Endothelial cell of umbilical vein (primary cell): ENCODE measurements at regions of chr22 and their contacts with region 1.

Region 1: DNA sequence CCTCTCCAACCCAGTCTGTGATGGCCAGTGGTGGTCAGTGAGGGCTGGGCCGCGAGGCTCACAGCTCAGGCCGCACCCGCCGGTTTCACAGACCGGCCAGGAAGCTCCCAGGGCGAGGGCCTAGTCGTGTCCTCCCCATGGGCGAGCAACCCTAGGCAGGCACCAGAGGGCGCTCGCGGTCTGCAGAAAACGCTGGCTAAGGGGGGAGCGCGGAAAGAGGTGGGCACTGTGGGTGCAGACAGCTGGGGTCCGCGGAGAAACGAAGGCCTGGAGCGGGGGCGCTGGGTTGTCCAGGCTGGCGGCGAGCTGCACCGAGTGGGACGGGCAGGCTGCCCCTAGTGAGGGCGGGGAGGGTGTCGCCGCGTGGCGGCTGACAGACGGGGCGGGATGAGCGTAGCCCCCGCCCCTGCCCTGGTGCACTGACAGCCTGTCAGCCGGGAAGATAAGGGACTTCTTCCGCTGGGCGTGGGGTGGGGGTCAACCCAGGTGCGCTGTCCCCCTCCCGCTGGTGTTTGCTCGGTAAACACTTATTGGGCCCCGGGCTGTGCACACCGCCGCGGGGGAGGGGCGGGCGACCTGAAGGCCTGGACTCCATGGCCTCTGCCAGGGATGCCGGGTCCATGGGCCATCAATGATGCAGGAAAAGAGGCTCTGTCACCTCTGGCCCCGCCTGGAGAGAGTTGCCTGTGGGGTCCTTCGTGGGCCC is 7.5 kb downstream of the GP1BB start:
- DNase-seq: peak; percentile 67
- H3K4me3 ChIP-seq: peak overlapping the region in 2 of 3 experiments; percentile 6 to 25
- H3K27ac ChIP-seq: no peak overlapping the region
- H3K4me1 ChIP-seq: peaks cover 3% of the 10 kb centered on the region
- H3K27me3 ChIP-seq: no peaks in the 10 kb centered on the region
- CTCF ChIP-seq: peak; percentile 94 to 98
- POLR2A ChIP-seq: no peak

Region 2: DNA sequence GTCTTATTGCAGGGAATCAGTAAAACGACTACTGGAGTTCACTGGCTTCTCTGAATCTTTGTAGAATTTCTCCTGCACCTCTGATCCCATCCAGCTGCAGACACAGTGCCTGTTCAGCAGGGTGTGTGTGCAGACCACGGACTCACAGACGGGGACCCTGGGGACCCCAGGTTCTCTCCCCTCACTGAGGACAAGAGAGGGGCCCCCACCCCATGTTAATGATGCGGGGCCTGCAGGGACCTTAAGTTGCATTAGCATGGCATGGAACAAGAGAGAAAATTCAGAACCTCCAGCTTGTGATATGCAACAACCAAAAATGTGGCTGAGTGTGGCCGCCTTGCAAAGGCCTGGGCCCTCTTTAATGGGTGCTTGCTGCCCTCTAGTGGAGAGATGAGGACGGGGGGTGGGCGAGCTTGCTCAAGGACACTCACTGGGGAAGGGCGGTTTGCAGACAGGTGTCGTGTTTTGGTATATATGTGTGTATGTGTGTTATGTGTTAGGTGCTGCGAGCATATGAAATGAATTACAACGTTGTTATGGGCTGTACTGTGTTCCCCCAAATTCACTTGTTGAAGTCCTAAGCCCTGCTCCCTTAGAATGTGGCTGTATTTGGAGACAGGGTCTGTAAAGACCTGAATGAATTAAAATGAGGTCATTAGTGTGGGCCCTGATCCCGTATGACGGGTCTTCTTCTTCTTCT is 100.9 kb before region 1 on chr22:
- CTCF ChIA-PET with region 1: no interaction called
- POLR2A ChIA-PET with region 1: no interaction called
- dilution Hi-C with region 1: no loop called
- intact Hi-C with region 1: no loop called
- DNase-seq: peak; percentile 80
- H3K4me3 ChIP-seq: no peak overlapping the region
- H3K27ac ChIP-seq: no peak overlapping the region
- H3K4me1 ChIP-seq: no peaks in the 10 kb centered on the region
- H3K27me3 ChIP-seq: peaks cover 0 to 5% of the 10 kb centered on the region in 2 experiments
- CTCF ChIP-seq: peak; percentile 91 to 92
- POLR2A ChIP-seq: no peak

Region 3: GRCh38 chr22:19717691-19718455 is 12.9 kb before region 1 on chr22:
- CTCF ChIA-PET with region 1: interaction called, 16 read pairs
- POLR2A ChIA-PET with region 1: no interaction called
- dilution Hi-C with region 1: no loop called
- intact Hi-C with region 1: no loop called
- DNase-seq: peak; percentile 62
- H3K4me3 ChIP-seq: peak overlapping the region; percentile 13 to 51 (median 39)
- H3K27ac ChIP-seq: no peak overlapping the region
- H3K4me1 ChIP-seq: peaks cover 18% of the 10 kb centered on the region
- H3K27me3 ChIP-seq: no peaks in the 10 kb centered on the region
- CTCF ChIP-seq: peak; percentile 73 to 92
- POLR2A ChIP-seq: no peak

Region 4: GRCh38 chr22:19766511-19767426 is 36.0 kb after region 1 on chr22:
- CTCF ChIA-PET with region 1: interaction called, 18 read pairs
- POLR2A ChIA-PET with region 1: no interaction called
- dilution Hi-C with region 1: no loop called
- intact Hi-C with region 1: loop called (anchors 1 kb)
- DNase-seq: no peak
- H3K4me3 ChIP-seq: no peak overlapping the region
- H3K27ac ChIP-seq: no peak overlapping the region
- H3K4me1 ChIP-seq: peaks cover 5% of the 10 kb centered on the region
- H3K27me3 ChIP-seq: peaks cover 11 to 19% of the 10 kb centered on the region in 2 experiments
- CTCF ChIP-seq: peak; percentile 33 to 39
- POLR2A ChIP-seq: no peak

Region 5: GRCh38 chr22:19854778-19855503 is 124.1 kb after region 1 on chr22 and contains the starts of genes GNB1L and RTL10:
- CTCF ChIA-PET with region 1: interaction called, 9 read pairs
- POLR2A ChIA-PET with region 1: no interaction called
- dilution Hi-C with region 1: no loop called
- intact Hi-C with region 1: loop called (anchors 2 kb)
- DNase-seq: peak; percentile 98
- H3K4me3 ChIP-seq: peak within 1 kb of the TSS; percentile 78 to 97 (median 88)
- H3K27ac ChIP-seq: peak within 1 kb of the TSS; percentile 65
- H3K4me1 ChIP-seq: peaks cover 32% of the 10 kb centered on the region
- H3K27me3 ChIP-seq: no peaks in the 10 kb centered on the region
- CTCF ChIP-seq: no peak
- POLR2A ChIP-seq: peak; percentile 98
- total RNA-seq, gene GNB1L: 5.9 and 11.2 TPM in 2 replicates
- total RNA-seq, gene RTL10: 31.9 and 32.1 TPM in 2 replicates

Region 6: DNA sequence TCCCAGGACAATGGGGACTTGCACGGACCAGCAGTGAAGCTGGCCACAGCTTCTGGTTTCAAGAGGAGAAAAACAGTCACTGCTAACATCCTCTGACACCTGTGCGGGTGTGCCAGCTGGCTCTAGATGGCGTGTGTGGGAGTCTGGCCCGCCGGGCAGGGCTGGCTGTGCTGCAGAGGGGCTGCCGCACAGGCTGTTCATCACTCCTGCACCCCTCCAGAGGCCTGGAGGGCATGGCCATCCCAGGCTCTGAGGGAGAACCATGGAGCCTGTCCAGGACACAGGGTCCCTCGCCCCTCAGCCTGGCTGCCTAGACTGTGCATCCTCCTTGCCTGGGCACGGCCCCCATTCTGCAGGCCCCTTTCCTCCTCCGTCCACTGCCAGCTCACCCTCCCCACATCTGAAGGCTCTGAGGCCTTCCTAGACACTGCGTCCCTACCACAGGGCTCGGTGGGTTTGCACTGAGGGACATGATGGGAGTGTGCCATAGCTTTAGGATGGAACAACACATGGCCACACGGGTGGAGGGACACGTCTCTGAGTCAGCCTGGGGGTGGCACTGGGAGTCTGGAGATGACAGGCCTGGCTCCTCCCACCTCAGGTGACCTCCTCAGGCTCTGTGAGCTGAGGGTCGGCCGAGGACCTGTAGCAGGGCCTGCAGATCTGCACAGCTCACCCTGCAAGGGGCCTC is 166.0 kb after region 1 on chr22:
- CTCF ChIA-PET with region 1: interaction called, 51 read pairs
- POLR2A ChIA-PET with region 1: no interaction called
- dilution Hi-C with region 1: no loop called
- intact Hi-C with region 1: no loop called
- DNase-seq: no peak
- H3K4me3 ChIP-seq: no peak overlapping the region
- H3K27ac ChIP-seq: no peak overlapping the region
- H3K4me1 ChIP-seq: peaks cover 25% of the 10 kb centered on the region
- H3K27me3 ChIP-seq: no peaks in the 10 kb centered on the region
- CTCF ChIP-seq: no peak
- POLR2A ChIP-seq: no peak

Region 7: GRCh38 chr22:19941365-19942082 is 210.7 kb after region 1 on chr22 and contains the starts of genes COMT and TXNRD2:
- CTCF ChIA-PET with region 1: interaction called, 15 read pairs
- POLR2A ChIA-PET with region 1: no interaction called
- dilution Hi-C with region 1: no loop called
- intact Hi-C with region 1: no loop called
- DNase-seq: peak; percentile 57
- H3K4me3 ChIP-seq: peak within 1 kb of the TSS; percentile 45 to 86 (median 83)
- H3K27ac ChIP-seq: peak within 1 kb of the TSS; percentile 84
- H3K4me1 ChIP-seq: peaks cover 41% of the 10 kb centered on the region
- H3K27me3 ChIP-seq: no peaks in the 10 kb centered on the region
- CTCF ChIP-seq: no peak
- POLR2A ChIP-seq: peak; percentile 82
- total RNA-seq, gene COMT: 221 and 246 TPM in 2 replicates
- total RNA-seq, gene TXNRD2: 211 and 245 TPM in 2 replicates

Region 8: DNA sequence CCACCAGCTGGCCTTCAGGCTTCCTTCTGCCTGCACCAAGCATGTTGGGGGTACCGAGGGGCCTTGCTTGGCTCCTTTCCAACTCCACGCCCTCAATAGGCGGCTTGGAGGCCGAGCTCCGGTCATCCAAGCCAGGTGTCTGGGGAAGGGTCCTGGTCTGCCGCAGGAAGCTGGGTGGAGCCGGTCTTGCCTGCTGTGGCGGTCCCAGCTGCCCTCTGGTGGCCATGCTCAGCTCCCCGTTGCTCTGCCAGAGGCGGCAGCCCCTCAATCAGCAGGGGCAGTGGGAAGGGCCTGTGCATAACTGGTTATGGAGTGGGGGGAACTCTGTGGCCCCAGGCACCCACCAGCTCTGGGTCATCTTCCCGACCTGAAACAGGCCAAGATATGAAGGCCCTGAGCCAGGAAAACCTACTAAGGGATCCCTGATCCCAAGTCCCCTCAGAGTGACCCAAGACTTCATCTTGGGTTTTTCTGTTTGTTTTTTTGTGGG is 282.6 kb after region 1 on chr22:
- CTCF ChIA-PET with region 1: interaction called, 13 read pairs
- POLR2A ChIA-PET with region 1: no interaction called
- dilution Hi-C with region 1: no loop called
- intact Hi-C with region 1: loop called (anchors 2 kb)
- DNase-seq: peak; percentile 67
- H3K4me3 ChIP-seq: no peak overlapping the region
- H3K27ac ChIP-seq: no peak overlapping the region
- H3K4me1 ChIP-seq: peaks cover 8% of the 10 kb centered on the region
- H3K27me3 ChIP-seq: no peaks in the 10 kb centered on the region
- CTCF ChIP-seq: peak; percentile 91 to 97
- POLR2A ChIP-seq: no peak